Posterior cingulate gyrus (tissue), 11 donors: ENCODE measurements at regions of chr2 and their contacts with region 1.

Region 1: GRCh38 chr2:121400201-121400600 is 115.2 kb upstream of the TFCP2L1 start:
- DNase-seq: no peak

Region 2: DNA sequence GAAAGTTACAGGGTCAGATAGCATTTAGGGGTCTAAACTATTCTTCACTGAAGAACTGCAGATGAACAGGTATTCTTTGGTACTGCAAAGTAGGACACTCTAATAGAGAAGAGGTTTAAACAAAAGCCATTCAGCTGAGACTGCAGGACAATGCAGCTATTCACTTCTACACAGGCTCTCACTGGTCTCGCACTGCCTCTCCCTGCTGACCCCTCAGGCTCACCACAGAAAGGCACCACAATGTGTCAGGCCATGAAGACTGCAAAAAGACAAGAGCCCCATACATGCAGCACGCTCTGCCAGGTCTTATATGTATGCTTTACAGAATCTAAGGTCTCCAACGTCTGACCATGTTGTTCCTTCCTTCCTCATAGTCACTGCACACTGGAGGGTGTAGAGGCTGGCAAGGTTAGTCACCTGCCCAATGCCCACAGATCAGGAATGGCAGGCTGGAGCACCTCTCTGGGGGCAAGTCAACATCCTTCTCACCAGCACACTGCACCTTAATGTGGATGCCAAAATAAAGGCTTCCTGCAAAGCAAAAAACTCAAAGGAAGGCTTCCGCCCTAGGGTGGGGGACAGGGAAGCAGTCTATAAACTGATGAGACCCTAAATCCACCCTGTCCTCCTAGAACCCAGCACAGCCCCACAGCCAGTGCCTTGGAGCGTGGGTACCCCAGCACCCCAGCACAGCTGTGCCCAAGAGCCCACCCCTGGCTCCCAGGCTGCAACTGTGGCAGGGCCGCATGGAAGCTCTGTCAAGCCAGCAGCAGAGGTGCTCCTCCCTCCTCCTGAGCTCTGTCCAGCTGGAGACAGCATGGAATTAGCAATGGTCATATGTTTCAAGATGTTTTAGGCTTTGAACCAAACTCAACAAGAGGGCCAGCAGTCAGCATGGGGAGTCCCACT is 119.8 kb after region 1 on chr2:
- intact Hi-C with region 1: loop called (anchors 5 kb)
- DNase-seq: peak in 8 of 10 donors; percentile 44 to 95 (median 60)

Region 3: DNA sequence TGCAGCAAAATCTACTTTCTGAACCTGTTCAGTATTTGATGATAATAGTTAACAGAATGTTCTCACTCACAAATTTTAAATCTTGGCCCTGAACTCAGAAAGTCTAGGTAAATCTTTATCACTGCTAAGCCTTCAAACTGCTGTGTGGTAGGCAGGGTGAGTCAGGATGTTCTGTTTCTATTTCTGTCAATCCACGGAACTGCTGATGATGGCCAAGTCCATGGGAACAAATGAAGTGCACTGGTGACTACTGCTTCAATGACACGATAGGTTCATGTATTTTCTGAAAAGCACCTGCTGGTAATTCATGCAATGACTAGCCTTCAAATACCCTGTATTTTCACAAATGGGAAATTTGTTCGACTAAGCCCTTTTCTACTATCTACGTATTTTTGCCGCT is 322.3 kb after region 1 on chr2:
- intact Hi-C with region 1: loop called (anchors 5 kb)
- DNase-seq: no peak